OCI-LY7 (cell line): ENCODE measurements at regions of chr10 and their contacts with region 1.

Region 1: GRCh38 chr10:11611248-11612020 is at the start of gene USP6NL:
- DNase-seq: peak; percentile 90
- H3K4me3 ChIP-seq: peak within 1 kb of the TSS; percentile 81
- H3K27ac ChIP-seq: peak within 1 kb of the TSS; percentile 84
- H3K4me1 ChIP-seq: peaks cover 48% of the 10 kb centered on the region
- CTCF ChIP-seq: no peak
- total RNA-seq, gene USP6NL: 33.7 and 41.7 TPM in 2 replicates

Region 2: GRCh38 chr10:11533328-11533781 is 78.1 kb before region 1 on chr10:
- CTCF ChIA-PET with region 1: interaction called, 16 read pairs
- POLR2A ChIA-PET with region 1: interaction called, 43 read pairs
- intact Hi-C with region 1: loop called (anchors 1 kb)
- DNase-seq: peak; percentile 56
- H3K4me3 ChIP-seq: peak overlapping the region; percentile 62
- H3K27ac ChIP-seq: peak overlapping the region; percentile 95
- H3K4me1 ChIP-seq: peaks cover 100% of the 10 kb centered on the region
- CTCF ChIP-seq: peak; percentile 66

Region 3: GRCh38 chr10:11560076-11560709 is 51.2 kb before region 1 on chr10:
- CTCF ChIA-PET with region 1: no interaction called
- POLR2A ChIA-PET with region 1: interaction called, 13 read pairs
- intact Hi-C with region 1: loop called (anchors 2 kb)
- DNase-seq: peak; percentile 74
- H3K4me3 ChIP-seq: peak overlapping the region; percentile 22
- H3K27ac ChIP-seq: peak overlapping the region; percentile 30
- H3K4me1 ChIP-seq: peaks cover 51% of the 10 kb centered on the region
- CTCF ChIP-seq: no peak

Region 4: DNA sequence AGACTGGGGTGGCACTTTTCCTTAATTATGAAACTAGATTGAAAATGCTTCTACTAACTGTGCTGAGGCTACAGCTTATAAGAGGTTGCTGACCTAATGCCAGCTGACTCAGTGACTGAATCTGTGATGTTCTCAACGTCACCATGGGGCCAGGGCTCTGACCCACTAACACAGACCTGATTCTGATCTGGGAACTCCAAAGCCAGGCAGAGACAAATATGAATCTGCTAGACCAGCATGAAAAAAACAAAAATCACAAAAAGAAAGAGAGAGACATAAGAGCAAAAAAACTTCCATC is 16.1 kb before region 1 on chr10:
- CTCF ChIA-PET with region 1: no interaction called
- POLR2A ChIA-PET with region 1: interaction called, 19 read pairs
- intact Hi-C with region 1: no loop called
- DNase-seq: no peak
- H3K4me3 ChIP-seq: no peak overlapping the region
- H3K27ac ChIP-seq: peak overlapping the region; percentile 22
- H3K4me1 ChIP-seq: peaks cover 44% of the 10 kb centered on the region
- CTCF ChIP-seq: no peak

Region 5: DNA sequence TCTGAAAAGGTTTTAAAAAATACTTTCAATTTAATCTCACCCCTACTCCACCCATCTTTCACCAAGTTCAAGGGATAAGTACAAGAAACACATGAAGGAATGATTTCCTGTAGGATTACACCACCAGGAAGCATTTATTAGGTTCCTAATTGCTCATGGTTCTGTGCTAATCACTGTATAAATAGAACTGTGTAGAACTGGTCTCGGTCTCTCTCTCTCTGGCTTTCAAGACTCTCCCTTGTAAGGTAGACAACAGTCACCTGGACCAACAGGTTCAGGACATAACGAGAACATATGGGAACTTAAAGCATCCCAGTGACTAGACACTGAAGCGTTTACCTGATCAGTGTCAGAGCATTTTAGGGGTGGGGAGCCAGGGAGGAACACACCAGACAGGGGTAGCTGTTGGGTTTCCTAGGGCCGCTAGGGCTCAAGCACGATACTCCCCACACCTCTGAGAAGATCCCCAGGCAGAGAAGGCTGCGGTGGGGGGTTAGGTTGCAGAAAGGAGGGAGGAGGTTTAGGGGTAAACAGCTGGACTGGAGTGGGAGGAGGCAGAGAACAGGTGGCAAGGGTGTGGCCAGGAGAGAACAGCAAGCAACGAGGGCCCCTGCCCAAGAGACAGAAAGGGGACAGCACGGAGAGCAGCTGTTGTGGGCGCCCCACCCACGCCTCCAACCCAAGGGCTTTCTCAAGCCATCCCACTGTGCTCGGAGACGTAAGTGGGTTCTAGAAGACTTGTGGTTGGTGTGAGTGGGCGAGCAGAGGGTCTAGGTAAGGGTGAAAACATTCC is 52.5 kb after region 1 on chr10:
- CTCF ChIA-PET with region 1: interaction called, 4 read pairs
- POLR2A ChIA-PET with region 1: interaction called, 77 read pairs
- intact Hi-C with region 1: loop called (anchors 2 kb)
- DNase-seq: peak; percentile 72
- H3K4me3 ChIP-seq: peak overlapping the region; percentile 53
- H3K27ac ChIP-seq: peak overlapping the region; percentile 96
- H3K4me1 ChIP-seq: peaks cover 83% of the 10 kb centered on the region
- CTCF ChIP-seq: no peak

Region 6: DNA sequence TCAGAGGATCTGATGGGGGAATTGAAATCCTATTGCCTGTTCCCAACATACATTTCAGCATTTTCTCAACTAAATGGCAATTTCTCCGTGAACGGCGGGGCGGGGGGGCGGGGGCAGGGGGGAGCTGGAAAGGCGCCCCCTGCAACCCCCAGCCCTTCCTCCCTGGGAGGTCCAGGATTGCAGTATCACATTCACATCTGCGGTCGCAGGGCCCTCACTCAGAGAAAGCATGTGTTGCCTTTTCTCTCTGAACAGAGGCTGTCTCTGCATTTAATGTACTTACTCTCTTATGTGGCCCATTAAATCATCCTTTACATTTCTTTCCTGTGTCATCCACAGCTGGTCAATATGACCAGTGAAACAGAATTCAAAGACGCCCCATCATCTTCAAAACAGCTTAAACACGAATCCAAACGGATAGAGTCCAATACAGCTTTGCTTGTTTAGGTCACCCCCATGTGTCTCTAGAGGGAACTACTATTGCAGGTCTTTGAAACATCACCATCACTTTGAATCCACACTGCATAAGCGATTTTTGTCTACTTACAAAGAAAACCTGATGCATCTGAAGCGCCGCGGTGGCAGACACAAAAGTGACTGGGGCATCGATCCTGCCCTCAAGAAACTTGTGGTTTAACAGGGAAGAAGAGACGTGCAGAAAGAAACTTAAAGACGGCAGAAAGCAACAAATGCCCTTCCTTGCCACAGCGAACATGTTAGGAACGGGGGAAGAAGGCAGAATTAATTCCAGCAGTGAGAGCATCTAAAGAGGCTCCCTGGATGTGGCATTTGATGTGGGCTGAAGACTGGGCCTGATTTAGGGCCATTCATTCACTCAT is 113.7 kb after region 1 on chr10:
- CTCF ChIA-PET with region 1: no interaction called
- POLR2A ChIA-PET with region 1: interaction called, 3 read pairs
- intact Hi-C with region 1: loop called (anchors 2 kb)
- DNase-seq: peak; percentile 90
- H3K4me3 ChIP-seq: no peak overlapping the region
- H3K27ac ChIP-seq: peak overlapping the region; percentile 6
- H3K4me1 ChIP-seq: peaks cover 46% of the 10 kb centered on the region
- CTCF ChIP-seq: peak; percentile 98